Esophagus squamous epithelium (tissue), 5 donors: ENCODE measurements at regions of chr1 and their contacts with region 1.

Region 1: DNA sequence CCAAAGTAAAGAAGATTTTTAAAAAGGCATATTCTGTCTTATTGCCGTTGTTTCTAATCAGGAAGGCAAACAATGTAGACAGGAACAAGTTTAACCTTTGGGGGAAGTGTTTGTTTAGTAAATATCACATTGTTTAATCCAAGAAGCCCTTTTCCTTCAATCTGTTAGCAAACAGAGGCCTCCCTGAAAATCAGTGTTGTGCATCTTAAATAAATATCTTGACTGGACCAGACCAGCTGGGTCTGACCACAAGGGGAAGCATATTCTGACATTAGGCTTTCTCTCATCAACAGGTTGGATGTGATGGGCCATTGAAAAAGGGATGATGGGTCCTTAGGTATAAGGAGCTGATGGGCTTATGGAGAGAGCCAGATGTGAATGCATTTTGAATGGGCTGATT is 81.8 kb upstream of the SGIP1 start:
- DNase-seq: no peak
- H3K4me3 ChIP-seq: no peak overlapping the region
- H3K27ac ChIP-seq: no peak overlapping the region
- H3K4me1 ChIP-seq: no peaks in the 10 kb centered on the region
- H3K27me3 ChIP-seq: no peaks in the 10 kb centered on the region
- CTCF ChIP-seq: no peak
- POLR2A ChIP-seq: no peak

Region 2: DNA sequence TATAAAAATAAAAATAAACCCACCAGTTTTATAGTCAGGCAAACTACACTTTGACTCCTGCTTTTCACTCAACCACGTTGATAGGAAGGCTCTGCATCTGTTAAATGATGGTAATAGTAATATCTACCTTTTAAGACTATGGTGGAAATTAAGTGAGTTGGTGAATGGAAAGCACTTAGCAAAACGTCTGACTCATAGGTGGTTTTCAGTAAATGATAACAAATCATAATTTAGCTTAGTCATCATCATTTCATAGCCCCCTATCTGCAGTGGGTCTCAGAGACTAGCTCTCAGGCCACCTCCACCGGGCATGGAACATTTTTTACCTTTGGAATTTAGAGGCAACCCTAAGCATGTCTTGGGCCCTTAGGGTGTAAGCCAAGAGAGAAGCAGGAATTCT is 499.5 kb before region 1 on chr1:
- intact Hi-C with region 1: loop called (anchors 5 kb)
- DNase-seq: no peak
- H3K4me3 ChIP-seq: no peak overlapping the region
- H3K27ac ChIP-seq: no peak overlapping the region
- H3K4me1 ChIP-seq: no peaks in the 10 kb centered on the region
- H3K27me3 ChIP-seq: no peaks in the 10 kb centered on the region
- CTCF ChIP-seq: no peak
- POLR2A ChIP-seq: no peak

Region 3: GRCh38 chr1:66503841-66504470 is 51.8 kb after region 1 on chr1:
- intact Hi-C with region 1: no loop called
- DNase-seq: no peak
- H3K4me3 ChIP-seq: no peak overlapping the region
- H3K27ac ChIP-seq: no peak overlapping the region
- H3K4me1 ChIP-seq: no peaks in the 10 kb centered on the region
- H3K27me3 ChIP-seq: no peaks in the 10 kb centered on the region
- CTCF ChIP-seq: peak in 4 of 6 experiments; percentile 38 to 71 (median 58)
- POLR2A ChIP-seq: no peak